Naive thymus-derived CD4-positive, alpha-beta T cell (primary cell): ENCODE measurements at regions of chr11 and their contacts with region 1.

Region 1: GRCh38 chr11:124194698-124195410 is 11.7 kb downstream of the OR10D3 start:
- DNase-seq: peak in 6 of 9 donors; percentile 14 to 34 (median 26)
- ATAC-seq: peak; percentile 83
- H3K4me3 ChIP-seq: no peak overlapping the region
- H3K4me3 Mint-ChIP-seq: no peak overlapping the region
- H3K27ac ChIP-seq: no peak overlapping the region
- H3K27ac Mint-ChIP-seq: no peak overlapping the region
- H3K4me1 ChIP-seq: no peaks in the 10 kb centered on the region
- H3K4me1 Mint-ChIP-seq: peaks cover 0 to 2% (median 0%) of the 10 kb centered on the region in 7 donors
- H3K27me3 ChIP-seq: no peaks in the 10 kb centered on the region
- H3K27me3 Mint-ChIP-seq: peaks cover under 1 to 24% (median 13%) of the 10 kb centered on the region in 5 donors

Region 2: GRCh38 chr11:123640677-123641494 is 554.0 kb before region 1 on chr11:
- CTCF ChIA-PET with region 1: no interaction called
- POLR2A ChIA-PET with region 1: no interaction called
- intact Hi-C with region 1: loop called in 1 of 2 experiments (anchors 10 kb)
- DNase-seq: peak; percentile 29 to 65 (median 56)
- ATAC-seq: peak; percentile 77
- H3K4me3 ChIP-seq: no peak overlapping the region
- H3K4me3 Mint-ChIP-seq: no peak overlapping the region
- H3K27ac ChIP-seq: no peak overlapping the region
- H3K27ac Mint-ChIP-seq: peak overlapping the region in 1 of 9 donors; percentile 69
- H3K4me1 ChIP-seq: no peaks in the 10 kb centered on the region
- H3K4me1 Mint-ChIP-seq: peaks cover 0 to 4% (median 2%) of the 10 kb centered on the region in 7 donors
- H3K27me3 ChIP-seq: no peaks in the 10 kb centered on the region
- H3K27me3 Mint-ChIP-seq: peaks cover 11 to 46% (median 27%) of the 10 kb centered on the region in 5 donors

Region 3: GRCh38 chr11:124108156-124108555 is 86.7 kb before region 1 on chr11:
- CTCF ChIA-PET with region 1: no interaction called
- POLR2A ChIA-PET with region 1: no interaction called
- intact Hi-C with region 1: loop called (anchors 1 kb)
- DNase-seq: peak in 2 of 9 donors; percentile 7
- ATAC-seq: peak; percentile 38
- H3K4me3 ChIP-seq: no peak overlapping the region
- H3K4me3 Mint-ChIP-seq: no peak overlapping the region
- H3K27ac ChIP-seq: no peak overlapping the region
- H3K27ac Mint-ChIP-seq: no peak overlapping the region
- H3K4me1 ChIP-seq: no peaks in the 10 kb centered on the region
- H3K4me1 Mint-ChIP-seq: peaks cover 0 to 2% (median 0%) of the 10 kb centered on the region in 7 donors
- H3K27me3 ChIP-seq: no peaks in the 10 kb centered on the region
- H3K27me3 Mint-ChIP-seq: peaks cover 28 to 64% (median 38%) of the 10 kb centered on the region in 5 donors

Region 4: GRCh38 chr11:124222407-124222806 is 27.6 kb after region 1 on chr11:
- CTCF ChIA-PET with region 1: no interaction called
- POLR2A ChIA-PET with region 1: no interaction called
- intact Hi-C with region 1: no loop called
- DNase-seq: no peak
- ATAC-seq: no peak
- H3K4me3 ChIP-seq: no peak overlapping the region
- H3K4me3 Mint-ChIP-seq: no peak overlapping the region
- H3K27ac ChIP-seq: no peak overlapping the region
- H3K27ac Mint-ChIP-seq: no peak overlapping the region
- H3K4me1 ChIP-seq: no peaks in the 10 kb centered on the region
- H3K4me1 Mint-ChIP-seq: no peaks in the 10 kb centered on the region
- H3K27me3 ChIP-seq: no peaks in the 10 kb centered on the region
- H3K27me3 Mint-ChIP-seq: peaks cover 4 to 27% (median 13%) of the 10 kb centered on the region in 5 donors